K562 (cell line): ENCODE measurements at regions of chr1 and their contacts with region 1.

Region 1: DNA sequence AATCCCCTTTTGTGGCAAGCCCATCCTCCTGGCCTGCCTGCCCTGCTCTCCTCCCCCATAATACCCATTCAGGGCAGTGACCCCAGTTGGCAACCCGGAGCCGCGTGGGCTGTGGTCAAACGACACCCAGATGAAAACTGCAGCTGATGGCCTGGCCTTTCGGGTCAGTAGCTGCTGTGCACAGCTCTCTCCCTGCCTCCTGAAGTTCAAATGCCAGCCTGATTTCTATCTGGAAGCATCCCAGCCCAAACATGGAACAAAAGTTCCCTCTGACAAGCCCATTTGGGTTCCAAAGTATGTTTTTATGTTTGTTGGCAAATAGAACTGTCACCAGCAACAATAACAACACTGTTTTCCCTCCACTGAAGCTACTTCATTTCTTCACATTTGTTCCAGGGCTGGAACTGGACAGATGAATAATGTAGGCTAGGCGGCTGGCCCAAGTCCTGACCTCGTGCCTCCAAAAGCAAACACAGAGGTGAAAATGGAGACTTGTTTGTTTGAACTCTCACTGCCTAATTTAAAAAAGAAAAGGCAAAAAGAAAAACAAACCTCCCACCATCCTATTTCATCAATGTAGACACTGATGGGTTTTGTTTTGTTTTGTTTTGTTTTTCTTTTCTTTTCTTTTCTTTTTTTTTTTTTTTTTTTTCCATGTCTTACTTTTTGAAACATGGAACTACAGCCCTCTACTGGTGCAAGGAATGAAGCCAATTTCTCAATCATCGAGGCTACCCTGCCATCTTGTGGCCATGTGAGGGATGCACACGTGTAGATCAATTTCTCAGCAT is 179.0 kb downstream of the ADSS2 start:
- DNase-seq: peak; percentile 83 to 90 (median 89)
- ATAC-seq: peak; percentile 92
- H3K4me3 ChIP-seq: no peak overlapping the region
- H3K27ac ChIP-seq: no peak overlapping the region
- H3K4me1 ChIP-seq: peaks cover 6 to 12% of the 10 kb centered on the region in 2 experiments; a peak in 4 of 5 replicates
- H3K27me3 ChIP-seq: peaks cover 14 to 28% of the 10 kb centered on the region in 2 experiments; a peak in 3 of 5 replicates
- CTCF ChIP-seq: peak; percentile 98 to 100 (median 99)
- EP300 ChIP-seq: no peak
- POLR2A ChIP-seq: no peak
- RAD21 ChIP-seq: peak; percentile 99 to 100

Region 2: DNA sequence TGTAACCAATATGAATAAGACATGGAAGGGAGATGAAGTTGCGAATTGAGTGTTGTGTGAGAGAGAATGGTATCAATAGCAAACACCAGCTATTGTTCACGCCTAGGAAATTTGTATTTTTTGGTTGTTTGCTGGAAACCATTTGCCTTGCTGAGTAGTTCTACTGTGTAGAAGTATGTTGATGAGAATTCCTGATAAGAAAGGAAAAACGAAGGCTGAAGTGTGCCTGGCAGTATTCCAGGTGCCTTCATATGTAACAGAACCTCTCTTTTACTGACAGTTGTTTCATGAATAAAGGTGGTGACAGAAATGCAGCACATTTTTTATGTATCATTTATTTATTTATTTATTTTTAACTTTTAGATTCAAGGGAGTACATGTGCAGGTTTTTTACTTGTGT is 937.4 kb before region 1 on chr1:
- CTCF ChIA-PET with region 1: no interaction called
- POLR2A ChIA-PET with region 1: no interaction called
- in situ Hi-C with region 1: loop called (anchors 10 kb)
- intact Hi-C with region 1: no loop called
- DNase-seq: peak in 1 of 4 experiments; percentile 10
- ATAC-seq: no peak
- H3K4me3 ChIP-seq: no peak overlapping the region
- H3K27ac ChIP-seq: no peak overlapping the region
- H3K4me1 ChIP-seq: no peaks in the 10 kb centered on the region
- H3K27me3 ChIP-seq: no peaks in the 10 kb centered on the region
- CTCF ChIP-seq: no peak
- EP300 ChIP-seq: no peak
- POLR2A ChIP-seq: no peak
- RAD21 ChIP-seq: no peak

Region 3: DNA sequence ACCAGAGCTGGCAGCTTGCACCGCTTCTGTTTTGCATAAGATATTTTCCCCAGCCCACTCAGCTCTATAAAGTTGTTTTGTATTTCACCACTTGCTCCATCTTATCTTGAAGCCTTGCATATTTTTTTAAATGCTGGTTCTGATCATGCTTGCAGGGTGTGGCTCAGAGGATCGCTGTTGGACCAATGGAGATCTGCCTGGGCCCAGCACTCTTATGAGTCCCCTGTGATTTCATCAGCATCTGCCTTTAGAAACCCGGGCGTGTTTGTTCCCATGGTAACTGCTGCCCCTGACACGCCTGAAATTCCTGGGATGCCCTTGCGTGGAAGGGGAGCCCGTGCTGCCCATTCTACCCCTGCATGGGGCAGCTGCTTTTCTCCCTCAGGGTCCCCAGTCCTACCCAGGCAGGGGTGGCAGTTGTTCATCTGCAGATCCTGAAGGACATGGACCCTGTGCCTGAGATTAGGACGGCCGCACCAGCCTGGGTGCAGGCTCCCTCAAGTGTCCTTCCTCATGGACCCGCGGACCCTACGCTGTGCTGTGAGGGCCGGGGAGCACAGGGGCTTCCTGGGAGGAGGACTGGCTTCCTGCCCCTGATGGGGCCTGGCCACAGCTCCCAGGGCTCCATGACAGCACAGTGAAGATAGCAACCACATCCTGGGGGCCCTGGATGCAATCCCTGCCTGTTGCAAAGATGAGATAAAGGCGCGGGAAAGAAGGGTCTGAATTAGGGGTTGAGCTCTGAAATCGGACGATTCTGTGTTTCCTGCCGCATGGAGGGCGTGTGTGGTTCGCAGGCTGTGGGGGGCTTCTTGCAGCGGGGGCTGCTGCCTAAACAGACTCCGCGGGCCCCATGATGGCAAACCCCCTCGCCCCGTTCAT is 790.3 kb before region 1 on chr1:
- CTCF ChIA-PET with region 1: no interaction called
- POLR2A ChIA-PET with region 1: no interaction called
- in situ Hi-C with region 1: loop called (anchors 25 kb)
- intact Hi-C with region 1: loop called (anchors 5 kb)
- DNase-seq: no peak
- ATAC-seq: peak; percentile 50
- H3K4me3 ChIP-seq: no peak overlapping the region
- H3K27ac ChIP-seq: no peak overlapping the region
- H3K4me1 ChIP-seq: peaks cover 0 to 18% of the 10 kb centered on the region in 2 experiments; a peak in 1 of 5 replicates
- H3K27me3 ChIP-seq: 0 out of 5 replicates have a peak, but pooled peaks cover 0 to 18% of the 10 kb centered on the region in 2 experiments
- CTCF ChIP-seq: no peak
- EP300 ChIP-seq: no peak
- POLR2A ChIP-seq: no peak
- RAD21 ChIP-seq: no peak

Region 4: DNA sequence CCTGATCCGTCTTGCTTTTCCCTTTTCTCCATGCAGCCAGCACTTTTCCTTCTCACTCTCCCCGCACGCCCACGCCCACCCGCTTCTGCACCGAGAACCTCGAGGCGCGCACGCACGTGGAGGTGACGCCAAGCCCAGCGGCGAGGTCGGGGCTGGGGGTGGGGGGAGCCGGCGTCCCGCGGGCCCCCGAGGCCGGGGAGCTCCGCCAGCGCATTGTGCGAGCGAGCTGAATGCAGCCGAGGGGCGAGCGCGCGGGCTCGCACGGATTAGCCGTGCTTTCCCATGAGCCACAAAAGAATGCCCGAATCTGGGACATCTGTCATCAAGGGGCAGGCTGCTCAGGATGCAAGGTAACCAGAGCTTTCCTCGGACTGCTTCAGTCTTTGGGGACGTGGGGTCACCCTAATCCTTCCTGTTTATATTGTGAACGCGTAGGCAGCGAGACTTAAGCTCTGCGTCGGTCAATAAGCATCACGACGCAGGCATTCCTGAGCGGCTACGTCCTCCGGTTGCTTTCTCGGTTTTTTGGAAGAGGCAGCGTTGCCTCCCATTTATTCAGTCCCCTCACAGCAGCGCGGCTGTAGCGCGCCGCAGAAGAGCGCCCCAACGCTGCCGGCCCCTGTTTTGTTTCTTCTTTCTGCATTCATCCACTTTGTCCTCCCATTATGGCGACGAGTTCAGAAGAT is 355.3 kb before region 1 on chr1:
- CTCF ChIA-PET with region 1: no interaction called
- POLR2A ChIA-PET with region 1: no interaction called
- in situ Hi-C with region 1: no loop called
- intact Hi-C with region 1: loop called (anchors 5 kb)
- DNase-seq: no peak
- ATAC-seq: no peak
- H3K4me3 ChIP-seq: no peak overlapping the region
- H3K27ac ChIP-seq: no peak overlapping the region
- H3K4me1 ChIP-seq: peaks cover 0 to 5% of the 10 kb centered on the region in 2 experiments; a peak in 1 of 5 replicates
- H3K27me3 ChIP-seq: peaks cover 13 to 35% of the 10 kb centered on the region in 2 experiments
- CTCF ChIP-seq: no peak
- EP300 ChIP-seq: no peak
- POLR2A ChIP-seq: no peak
- RAD21 ChIP-seq: no peak

Region 5: DNA sequence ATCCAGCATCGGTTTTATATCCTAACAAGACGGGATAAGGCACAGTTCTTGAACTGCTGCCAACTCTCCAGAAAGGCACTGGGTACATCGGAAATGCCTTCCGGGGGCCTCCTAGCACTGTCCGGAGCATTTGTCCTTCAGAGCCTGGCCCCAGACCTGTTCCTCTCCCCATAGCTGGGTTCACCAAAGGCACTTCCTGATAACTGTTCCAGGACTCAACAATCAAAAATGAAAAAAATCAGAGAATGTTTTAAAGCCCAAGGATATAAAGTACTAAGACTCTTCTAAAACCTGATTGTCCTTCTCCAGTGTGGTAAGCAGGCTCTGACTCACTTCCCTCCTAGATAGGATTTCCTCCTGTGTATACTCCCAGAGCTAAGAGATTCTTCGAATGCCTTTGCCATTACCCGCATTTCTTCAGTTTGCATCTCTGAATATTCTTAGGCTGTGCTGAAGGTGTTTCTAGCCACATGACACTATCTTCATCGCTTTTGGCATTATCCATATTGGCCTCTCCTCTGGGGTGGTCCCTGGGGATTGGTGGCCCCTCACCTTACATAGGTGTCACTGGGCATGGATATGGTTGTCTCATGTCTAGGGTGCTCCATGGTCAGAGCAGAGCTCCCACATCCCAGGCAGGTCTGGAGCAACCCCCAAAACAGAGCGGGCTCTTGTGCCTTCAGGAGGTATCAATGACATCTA is 108.7 kb before region 1 on chr1:
- CTCF ChIA-PET with region 1: interaction called, 3 read pairs
- POLR2A ChIA-PET with region 1: no interaction called
- in situ Hi-C with region 1: no loop called
- intact Hi-C with region 1: loop called (anchors 5 kb)
- DNase-seq: no peak
- ATAC-seq: no peak
- H3K4me3 ChIP-seq: no peak overlapping the region
- H3K27ac ChIP-seq: no peak overlapping the region
- H3K4me1 ChIP-seq: no peaks in the 10 kb centered on the region
- H3K27me3 ChIP-seq: peaks cover 0 to 2% of the 10 kb centered on the region in 2 experiments; a peak in 2 of 5 replicates
- CTCF ChIP-seq: no peak
- EP300 ChIP-seq: no peak
- POLR2A ChIP-seq: no peak
- RAD21 ChIP-seq: no peak